ENCODE measurements at regions of chr7 and their contacts with region 1.

Region 1: DNA sequence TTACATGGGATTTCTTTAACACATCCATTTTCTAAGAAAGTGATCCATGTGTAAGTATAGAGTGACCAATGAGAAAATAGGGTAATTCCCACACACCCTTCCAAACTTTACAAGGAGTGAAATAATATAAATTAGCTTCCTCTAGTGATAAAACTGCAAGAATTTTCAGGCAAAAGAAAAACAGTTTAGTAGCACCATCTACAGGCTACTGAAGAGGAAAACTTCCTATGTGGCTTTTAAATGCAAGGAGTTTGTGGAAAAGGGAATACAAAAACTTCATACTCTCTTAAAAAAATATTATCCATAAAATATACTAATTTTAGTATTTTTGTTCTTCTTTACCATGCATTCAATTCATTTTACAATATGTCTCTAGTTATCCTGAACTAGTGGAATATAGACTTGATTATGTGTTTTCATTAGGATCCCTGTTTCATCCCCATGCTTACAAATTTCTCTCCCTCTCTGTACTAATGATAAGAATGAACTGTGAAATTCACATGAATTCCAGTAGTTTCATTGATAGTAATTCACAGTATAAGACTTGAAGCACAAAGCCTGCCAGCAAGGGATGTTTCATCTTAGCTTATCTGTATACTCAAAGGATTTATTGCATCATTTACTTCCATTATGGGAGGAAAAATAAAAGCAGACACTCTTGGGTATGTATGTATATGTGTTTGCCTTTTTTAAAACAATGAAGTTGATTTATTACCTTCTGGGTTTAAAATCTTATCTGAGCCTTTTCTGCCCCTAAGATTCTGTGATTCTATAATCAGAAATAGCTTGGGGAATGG is 442.9 kb downstream of the AUTS2 start:
- H3K4me3 Mint-ChIP-seq: no peak overlapping the region
- H3K27ac Mint-ChIP-seq: no peak overlapping the region
- H3K4me1 Mint-ChIP-seq: no peaks in the 10 kb centered on the region
- H3K27me3 Mint-ChIP-seq: no peaks in the 10 kb centered on the region

Region 2: GRCh38 chr7:68176974-68177373 is 1864.2 kb before region 1 on chr7:
- intact Hi-C with region 1: loop called (anchors 5 kb)
- H3K4me3 Mint-ChIP-seq: no peak overlapping the region
- H3K27ac Mint-ChIP-seq: no peak overlapping the region
- H3K4me1 Mint-ChIP-seq: no peaks in the 10 kb centered on the region
- H3K27me3 Mint-ChIP-seq: no peaks in the 10 kb centered on the region

Region 3: DNA sequence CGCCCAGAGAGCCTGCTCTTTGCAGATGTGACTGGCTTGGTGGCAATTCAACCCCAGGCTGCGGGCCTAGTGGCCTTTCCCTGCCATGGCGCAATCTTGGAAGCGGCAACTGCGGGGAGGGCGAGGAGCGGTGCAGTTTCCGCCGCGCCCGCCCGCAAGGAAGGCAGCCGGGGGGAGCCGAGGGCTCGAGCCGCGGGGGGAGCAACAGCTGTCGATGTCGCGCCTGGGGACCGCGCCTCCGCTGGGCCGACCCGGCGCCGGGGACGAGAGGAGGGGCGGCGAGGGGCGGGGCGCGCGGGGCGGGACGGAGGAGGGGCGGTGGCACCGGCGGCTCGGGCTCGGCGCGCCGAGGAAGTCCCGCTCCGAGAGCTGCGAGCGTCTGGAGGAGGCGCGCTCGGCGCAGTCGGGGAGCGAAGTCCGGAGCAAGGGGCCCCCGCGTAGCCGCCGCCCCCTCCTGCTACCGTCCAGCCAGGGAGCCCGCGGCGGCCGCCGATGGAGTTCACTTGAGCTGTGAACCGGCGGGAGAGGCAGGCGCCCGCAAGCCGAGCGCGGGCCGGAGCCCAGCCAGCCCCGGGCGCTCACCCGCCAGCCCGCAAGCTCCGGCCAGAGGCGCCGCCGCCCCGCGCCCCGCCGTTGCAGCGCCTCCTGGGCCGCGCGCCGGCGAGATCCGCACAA is 652.7 kb after region 1 on chr7:
- intact Hi-C with region 1: loop called (anchors 2 kb)
- H3K4me3 Mint-ChIP-seq: peak overlapping the region; percentile 71
- H3K27ac Mint-ChIP-seq: no peak overlapping the region
- H3K4me1 Mint-ChIP-seq: peaks cover 14% of the 10 kb centered on the region
- H3K27me3 Mint-ChIP-seq: peaks cover 61% of the 10 kb centered on the region

Measured in dendritic cell treated with granulocyte-macrophage colony-stimulating factor and Interleukin-4, amounts not matched to agents 40 ng/mL and 50 ng/mL, for 4 days (primary cell).